Dorsolateral prefrontal cortex (tissue), 120 donors: ENCODE measurements at regions of chr7 and their contacts with region 1.

Region 1: DNA sequence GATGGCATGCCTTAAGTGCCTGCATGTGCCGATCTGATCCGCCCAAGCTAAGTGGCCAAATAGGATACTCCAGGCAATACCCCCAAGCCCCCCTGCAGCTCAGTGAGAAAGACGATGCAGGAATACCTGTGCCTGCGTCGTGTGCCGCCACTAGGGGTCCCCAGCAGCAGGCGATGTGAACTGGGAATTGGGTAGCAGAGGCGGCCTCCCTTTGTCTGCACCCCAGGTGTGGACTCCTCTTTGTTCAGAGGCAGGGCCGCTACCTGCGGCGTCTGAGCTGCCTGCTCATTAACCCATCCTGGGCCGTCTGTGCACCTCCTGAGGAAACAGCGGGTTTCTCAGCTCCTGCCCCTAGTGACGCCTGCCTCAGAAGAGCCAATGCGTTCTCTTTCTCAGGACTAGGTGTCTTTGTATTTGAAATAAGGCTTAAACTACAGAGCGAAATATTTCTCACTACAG is 4.8 kb upstream of the CHN2 start:
- DNase-seq: peak; percentile 58 to 82 (median 72)
- H3K4me3 ChIP-seq: peak overlapping the region in 56 of 59 donors; percentile 3 to 57 (median 38)
- H3K27ac ChIP-seq: peak overlapping the region in 20 of 59 donors; percentile 4 to 97 (median 38)
- H3K27me3 ChIP-seq: peaks cover 0 to 10% (median 0%) of the 10 kb centered on the region in 45 donors
- CTCF ChIP-seq: peak; percentile 65 to 93 (median 84)

Region 2: GRCh38 chr7:28921822-28922221 is 267.9 kb before region 1 on chr7:
- intact Hi-C with region 1: loop called in 1 of 2 experiments (anchors 5 kb)
- DNase-seq: peak in 6 of 10 donors; percentile 40 to 74 (median 56)
- H3K4me3 ChIP-seq: peak overlapping the region in 32 of 59 donors; percentile 0 to 47 (median 26)
- H3K27ac ChIP-seq: peak overlapping the region in 1 of 59 donors; percentile 27
- H3K27me3 ChIP-seq: no peaks in the 10 kb centered on the region
- CTCF ChIP-seq: peak; percentile 83 to 99 (median 93)

Region 3: GRCh38 chr7:28964058-28964457 is 225.7 kb before region 1 on chr7:
- intact Hi-C with region 1: no loop called
- DNase-seq: no peak
- H3K4me3 ChIP-seq: no peak overlapping the region
- H3K27ac ChIP-seq: no peak overlapping the region
- H3K27me3 ChIP-seq: no peaks in the 10 kb centered on the region
- CTCF ChIP-seq: no peak

Region 4: DNA sequence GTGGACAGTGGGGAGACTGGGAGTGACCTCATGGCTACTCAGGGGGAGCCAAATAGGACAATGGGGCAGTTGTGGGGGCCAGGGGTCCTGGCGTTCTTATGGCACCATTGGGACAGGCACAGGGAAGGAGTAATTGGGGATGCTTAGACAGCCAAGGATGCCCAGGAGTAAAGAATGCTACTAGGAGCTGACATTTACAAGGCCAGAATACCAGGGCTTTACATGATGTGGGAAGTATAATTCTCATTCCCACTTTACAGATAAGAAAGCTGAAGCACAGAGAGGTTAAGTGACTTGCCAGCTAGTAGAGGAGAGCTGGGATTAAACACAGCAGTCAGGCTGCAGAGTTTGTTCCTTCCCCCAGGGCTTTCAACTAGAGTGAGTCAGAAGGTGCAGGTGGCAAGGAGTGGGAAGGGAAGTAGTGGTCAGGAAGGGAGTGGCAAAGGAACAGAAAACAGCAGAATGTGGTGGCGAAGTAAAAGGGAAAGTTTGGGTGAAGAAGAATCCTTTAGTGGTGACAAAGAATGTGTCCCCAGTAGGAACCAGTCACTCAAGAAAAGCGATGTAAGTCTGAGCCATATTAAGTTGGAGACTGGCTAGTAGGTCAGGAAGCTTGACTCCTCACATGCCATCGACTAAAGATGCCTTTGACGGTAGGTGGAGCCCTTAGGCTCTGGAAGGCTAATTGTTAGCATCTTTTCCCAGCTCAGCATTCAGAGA is 76.2 kb before region 1 on chr7:
- intact Hi-C with region 1: loop called in 1 of 2 experiments (anchors 5 kb)
- DNase-seq: no peak
- H3K4me3 ChIP-seq: no peak overlapping the region
- H3K27ac ChIP-seq: no peak overlapping the region
- H3K27me3 ChIP-seq: peaks cover 0 to 13% (median 0%) of the 10 kb centered on the region in 45 donors
- CTCF ChIP-seq: peak in 25 of 56 donors; percentile 13 to 46 (median 23)

Region 5: GRCh38 chr7:29408841-29409243 is 219.1 kb after region 1 on chr7:
- intact Hi-C with region 1: loop called (anchors 2 to 5 kb)
- DNase-seq: peak in 4 of 10 donors; percentile 24 to 83 (median 59)
- H3K4me3 ChIP-seq: no peak overlapping the region
- H3K27ac ChIP-seq: no peak overlapping the region
- H3K27me3 ChIP-seq: no peaks in the 10 kb centered on the region
- CTCF ChIP-seq: peak; percentile 84 to 99 (median 93)

Region 6: GRCh38 chr7:29488977-29489376 is 299.2 kb after region 1 on chr7:
- intact Hi-C with region 1: loop called in 1 of 2 experiments (anchors 10 kb)
- DNase-seq: no peak
- H3K4me3 ChIP-seq: peak overlapping the region in 22 of 59 donors; percentile 0 to 63 (median 9)
- H3K27ac ChIP-seq: peak overlapping the region; percentile 14 to 100 (median 97)
- H3K27me3 ChIP-seq: no peaks in the 10 kb centered on the region
- CTCF ChIP-seq: no peak